CD8-positive, alpha-beta T cell (primary cell): ENCODE measurements at regions of chrX and their contacts with region 1.

Region 1: GRCh38 chrX:39772057-39772832 is 325.5 kb downstream of the BCOR start:
- DNase-seq: peak in 8 of 9 experiments; percentile 9 to 60 (median 54)
- ATAC-seq: peak; percentile 45
- H3K4me3 ChIP-seq: no peak overlapping the region
- H3K4me3 Mint-ChIP-seq: peak overlapping the region; percentile 61
- H3K27ac ChIP-seq: peak overlapping the region in 1 of 2 experiments; percentile 71
- H3K27ac Mint-ChIP-seq: peak overlapping the region; percentile 94
- H3K4me1 ChIP-seq: peaks cover 28% of the 10 kb centered on the region
- H3K4me1 Mint-ChIP-seq: peaks cover 47% of the 10 kb centered on the region
- H3K27me3 ChIP-seq: no peaks in the 10 kb centered on the region
- H3K27me3 Mint-ChIP-seq: no peaks in the 10 kb centered on the region
- CTCF ChIP-seq: no peak

Region 2: GRCh38 chrX:38817004-38817703 is 955.1 kb before region 1 on chrX:
- CTCF ChIA-PET with region 1: no interaction called
- POLR2A ChIA-PET with region 1: no interaction called
- intact Hi-C with region 1: loop called in 1 of 2 experiments (anchors 10 kb)
- DNase-seq: peak in 3 of 9 experiments; percentile 23 to 55 (median 26)
- ATAC-seq: peak; percentile 48
- H3K4me3 ChIP-seq: no peak overlapping the region
- H3K4me3 Mint-ChIP-seq: peak overlapping the region; percentile 27
- H3K27ac ChIP-seq: peak overlapping the region; percentile 3 to 61
- H3K27ac Mint-ChIP-seq: no peak overlapping the region
- H3K4me1 ChIP-seq: peaks cover 47% of the 10 kb centered on the region
- H3K4me1 Mint-ChIP-seq: peaks cover 12% of the 10 kb centered on the region
- H3K27me3 ChIP-seq: no peaks in the 10 kb centered on the region
- H3K27me3 Mint-ChIP-seq: no peaks in the 10 kb centered on the region
- CTCF ChIP-seq: no peak

Region 3: GRCh38 chrX:39854772-39855747 is 82.8 kb after region 1 on chrX:
- CTCF ChIA-PET with region 1: no interaction called
- POLR2A ChIA-PET with region 1: no interaction called
- intact Hi-C with region 1: loop called (anchors 5 to 10 kb)
- DNase-seq: peak; percentile 47 to 94 (median 71)
- ATAC-seq: peak; percentile 83
- H3K4me3 ChIP-seq: peak overlapping the region; percentile 40 to 42
- H3K4me3 Mint-ChIP-seq: peak overlapping the region; percentile 69
- H3K27ac ChIP-seq: peak overlapping the region; percentile 78 to 97
- H3K27ac Mint-ChIP-seq: peak overlapping the region; percentile 97
- H3K4me1 ChIP-seq: peaks cover 32% of the 10 kb centered on the region
- H3K4me1 Mint-ChIP-seq: peaks cover 58% of the 10 kb centered on the region
- H3K27me3 ChIP-seq: no peaks in the 10 kb centered on the region
- H3K27me3 Mint-ChIP-seq: no peaks in the 10 kb centered on the region
- CTCF ChIP-seq: no peak

Region 4: DNA sequence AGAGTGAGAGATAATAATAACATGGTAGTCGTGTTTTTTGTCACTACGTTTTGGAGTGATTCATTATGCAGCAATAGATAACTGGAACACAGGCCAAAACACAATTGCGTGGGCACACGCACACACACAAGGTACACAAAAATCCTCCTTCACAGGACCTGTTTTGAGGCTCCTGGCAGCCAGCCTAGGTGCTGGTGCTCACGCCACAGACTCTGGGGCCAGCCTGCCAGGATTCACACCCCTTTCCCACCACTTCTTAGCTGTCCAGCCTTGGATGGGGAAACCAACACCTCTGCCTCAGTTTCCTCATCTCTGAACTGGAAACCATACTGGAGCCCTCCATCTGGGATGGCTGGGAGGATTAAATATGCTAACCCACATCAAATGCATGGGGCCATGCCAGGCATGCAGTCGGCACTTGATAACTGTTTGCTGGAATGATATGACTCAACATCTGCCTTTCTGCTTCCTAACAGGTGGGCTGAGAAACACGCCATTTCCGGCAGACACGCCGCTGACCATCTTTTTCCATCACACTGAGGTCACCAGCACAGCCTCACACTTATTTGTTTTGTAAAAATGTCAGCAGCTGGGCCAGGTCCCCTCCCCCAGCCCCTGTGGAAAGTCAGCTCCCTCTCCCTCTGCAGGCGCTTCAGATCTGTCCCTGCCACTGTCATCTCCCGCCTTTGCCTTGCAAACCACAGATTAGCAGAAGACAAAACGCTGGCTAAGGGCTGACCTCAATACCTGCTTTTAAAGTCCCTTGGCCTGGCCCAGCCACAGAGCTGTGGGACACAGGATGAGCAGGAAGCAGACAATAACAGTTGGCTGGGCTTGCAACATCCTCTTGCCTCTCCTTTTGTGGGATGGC is 88.0 kb after region 1 on chrX:
- CTCF ChIA-PET with region 1: no interaction called
- POLR2A ChIA-PET with region 1: no interaction called
- intact Hi-C with region 1: loop called in 1 of 2 experiments (anchors 10 kb)
- DNase-seq: peak; percentile 9 to 85 (median 68)
- ATAC-seq: peak; percentile 48
- H3K4me3 ChIP-seq: no peak overlapping the region
- H3K4me3 Mint-ChIP-seq: no peak overlapping the region
- H3K27ac ChIP-seq: no peak overlapping the region
- H3K27ac Mint-ChIP-seq: peak overlapping the region; percentile 83
- H3K4me1 ChIP-seq: peaks cover 26% of the 10 kb centered on the region
- H3K4me1 Mint-ChIP-seq: peaks cover 31% of the 10 kb centered on the region
- H3K27me3 ChIP-seq: no peaks in the 10 kb centered on the region
- H3K27me3 Mint-ChIP-seq: no peaks in the 10 kb centered on the region
- CTCF ChIP-seq: no peak

Region 5: GRCh38 chrX:40996886-40997530 is 1224.8 kb after region 1 on chrX:
- CTCF ChIA-PET with region 1: no interaction called
- POLR2A ChIA-PET with region 1: no interaction called
- intact Hi-C with region 1: no loop called
- DNase-seq: peak in 2 of 9 experiments; percentile 1 to 14
- ATAC-seq: no peak
- H3K4me3 ChIP-seq: no peak overlapping the region
- H3K4me3 Mint-ChIP-seq: no peak overlapping the region
- H3K27ac ChIP-seq: no peak overlapping the region
- H3K27ac Mint-ChIP-seq: no peak overlapping the region
- H3K4me1 ChIP-seq: no peaks in the 10 kb centered on the region
- H3K4me1 Mint-ChIP-seq: no peaks in the 10 kb centered on the region
- H3K27me3 ChIP-seq: no peaks in the 10 kb centered on the region
- H3K27me3 Mint-ChIP-seq: no peaks in the 10 kb centered on the region
- CTCF ChIP-seq: no peak